ENCODE measurements at regions of chr15 and their contacts with region 1.

Region 1: DNA sequence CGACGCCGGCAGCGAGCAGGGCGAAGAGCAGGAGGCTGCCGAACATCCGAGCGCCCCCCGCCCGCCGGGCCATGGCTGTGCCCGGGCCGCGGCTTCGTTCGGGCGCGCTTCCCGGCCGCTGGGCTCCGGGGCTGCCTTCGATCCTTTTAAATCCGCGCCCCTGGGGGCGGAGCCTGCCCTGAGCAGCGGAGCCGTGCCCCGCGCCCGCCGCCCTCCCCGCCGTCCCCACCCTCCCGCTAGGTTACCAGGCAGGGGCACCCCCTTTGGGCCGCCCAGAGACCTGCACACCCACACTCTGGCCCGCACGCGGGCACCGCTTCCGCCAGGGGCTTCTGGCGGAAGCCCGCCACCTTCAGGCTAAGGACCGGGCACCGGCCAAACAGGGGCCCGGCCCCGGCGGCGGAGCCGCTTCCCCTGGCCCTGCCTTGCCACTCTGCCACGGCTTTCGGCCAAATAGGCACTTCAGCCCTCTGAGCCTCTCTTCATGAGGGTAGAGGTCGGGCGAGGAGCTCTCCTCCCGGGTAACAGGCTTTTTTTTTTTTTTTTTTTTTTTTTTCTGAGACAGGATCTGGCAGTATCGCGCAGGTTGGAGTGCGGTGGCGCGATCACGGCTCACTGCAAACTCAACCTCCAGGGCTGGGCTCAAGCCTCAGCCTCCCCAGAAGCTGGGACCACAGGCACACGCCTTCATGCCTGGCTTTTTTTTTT is at the start of gene NMB:
- DNase-seq: peak; percentile 95
- H3K4me3 Mint-ChIP-seq: peak within 1 kb of the TSS; percentile 74
- H3K27ac Mint-ChIP-seq: peak within 1 kb of the TSS; percentile 71
- H3K4me1 Mint-ChIP-seq: peaks cover 32% of the 10 kb centered on the region
- H3K27me3 Mint-ChIP-seq: no peaks in the 10 kb centered on the region
- CTCF ChIP-seq: peak; percentile 87
- total RNA-seq, gene NMB: 10.9 and 16.6 TPM in 2 replicates

Region 2: DNA sequence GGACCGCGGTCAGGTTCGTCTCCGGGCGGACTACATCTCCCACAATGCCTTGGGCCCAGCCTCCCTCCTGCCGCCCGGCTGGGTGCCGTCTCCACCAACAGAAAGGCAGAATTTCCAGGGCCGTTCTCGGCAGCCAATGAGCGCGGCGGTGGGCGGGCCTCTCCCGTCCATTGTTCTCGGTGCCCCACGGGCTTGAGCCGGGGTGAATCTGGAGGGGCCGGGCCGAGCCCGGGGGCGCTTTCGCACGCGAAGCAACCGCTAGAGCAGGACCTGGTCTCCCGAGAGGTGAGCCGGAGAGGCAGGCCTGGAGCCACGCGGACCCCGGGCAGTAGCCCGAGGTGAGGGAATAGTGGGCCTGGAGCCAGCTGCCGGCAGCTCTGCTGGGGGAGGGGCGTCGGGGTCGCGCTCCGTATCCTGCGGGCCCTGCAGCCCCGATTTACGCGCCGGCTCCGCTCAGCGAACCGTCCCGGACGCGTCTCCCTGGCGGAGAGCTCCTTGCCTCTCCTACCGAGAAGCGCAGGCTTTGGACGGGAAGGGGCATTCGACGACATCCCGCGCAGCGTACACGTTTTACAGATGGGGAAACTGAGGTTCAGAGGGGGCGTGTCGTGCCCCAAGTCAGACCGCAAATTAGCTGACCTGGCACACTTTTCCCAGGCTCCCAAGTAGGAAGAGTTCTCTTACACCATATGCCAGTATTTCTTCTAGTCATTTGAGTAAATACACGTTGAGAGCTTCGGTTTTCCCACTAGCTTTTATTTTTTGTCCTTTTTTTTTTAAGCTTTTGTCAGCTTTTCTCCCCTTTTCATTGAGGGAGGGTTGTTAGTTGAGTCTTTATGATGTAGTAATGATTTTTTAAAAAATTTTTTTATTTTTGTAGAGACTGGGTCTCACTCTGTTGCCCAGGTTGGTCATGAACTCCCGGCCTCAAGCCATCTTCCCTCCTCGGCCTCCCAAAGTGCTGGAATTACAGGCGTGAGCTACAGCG is 57.1 kb before region 1 on chr15 and contains the start of gene ZSCAN2:
- CTCF ChIA-PET with region 1: no interaction called
- intact Hi-C with region 1: loop called (anchors 5 kb)
- DNase-seq: peak; percentile 99
- H3K4me3 Mint-ChIP-seq: peak within 1 kb of the TSS; percentile 95
- H3K27ac Mint-ChIP-seq: peak within 1 kb of the TSS; percentile 80
- H3K4me1 Mint-ChIP-seq: peaks cover 39% of the 10 kb centered on the region
- H3K27me3 Mint-ChIP-seq: no peaks in the 10 kb centered on the region
- CTCF ChIP-seq: no peak
- total RNA-seq, gene ZSCAN2: 16.0 and 18.0 TPM in 2 replicates

Region 3: DNA sequence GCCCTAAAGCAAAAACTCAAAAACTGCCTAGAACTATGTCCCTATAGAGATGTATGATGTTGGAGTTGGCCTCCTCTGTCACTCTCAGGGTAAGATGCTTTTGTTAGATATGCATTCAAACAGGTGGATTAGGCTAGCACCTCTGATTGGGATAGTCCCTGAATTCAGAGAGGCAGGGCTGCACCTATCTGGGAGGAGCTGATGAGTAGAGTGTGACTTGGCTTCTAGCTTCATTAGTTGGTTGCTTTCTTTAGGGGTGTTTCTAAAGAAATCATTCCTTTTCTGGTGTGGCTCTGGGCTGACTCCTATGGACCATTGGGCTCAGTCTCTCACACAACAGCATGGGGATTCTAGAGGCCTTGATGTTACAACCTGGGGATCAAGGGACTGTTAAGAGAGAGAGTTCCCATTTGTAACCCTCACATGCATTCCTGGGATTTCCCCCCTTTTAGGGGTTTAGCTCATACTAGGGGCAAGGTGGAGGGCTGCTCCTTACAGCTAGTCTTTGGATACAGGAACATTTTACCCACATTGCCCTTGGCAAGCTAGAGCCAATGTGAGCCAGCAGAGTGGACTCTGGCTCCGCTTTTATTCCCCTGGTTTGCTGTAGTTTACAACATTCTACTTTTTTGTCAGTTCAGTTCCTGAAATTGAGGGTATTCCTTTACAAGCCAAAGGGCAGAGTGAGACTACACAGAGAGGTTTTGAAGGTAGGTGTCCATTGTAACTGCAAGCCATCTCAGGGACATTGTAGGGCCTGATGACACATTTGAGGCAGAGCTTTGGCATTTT is 97.7 kb after region 1 on chr15:
- CTCF ChIA-PET with region 1: interaction called, 6 read pairs
- intact Hi-C with region 1: loop called (anchors 2 kb)
- DNase-seq: no peak
- H3K4me3 Mint-ChIP-seq: no peak overlapping the region
- H3K27ac Mint-ChIP-seq: peak overlapping the region; percentile 40
- H3K4me1 Mint-ChIP-seq: peaks cover 36% of the 10 kb centered on the region
- H3K27me3 Mint-ChIP-seq: no peaks in the 10 kb centered on the region
- CTCF ChIP-seq: no peak

Region 4: DNA sequence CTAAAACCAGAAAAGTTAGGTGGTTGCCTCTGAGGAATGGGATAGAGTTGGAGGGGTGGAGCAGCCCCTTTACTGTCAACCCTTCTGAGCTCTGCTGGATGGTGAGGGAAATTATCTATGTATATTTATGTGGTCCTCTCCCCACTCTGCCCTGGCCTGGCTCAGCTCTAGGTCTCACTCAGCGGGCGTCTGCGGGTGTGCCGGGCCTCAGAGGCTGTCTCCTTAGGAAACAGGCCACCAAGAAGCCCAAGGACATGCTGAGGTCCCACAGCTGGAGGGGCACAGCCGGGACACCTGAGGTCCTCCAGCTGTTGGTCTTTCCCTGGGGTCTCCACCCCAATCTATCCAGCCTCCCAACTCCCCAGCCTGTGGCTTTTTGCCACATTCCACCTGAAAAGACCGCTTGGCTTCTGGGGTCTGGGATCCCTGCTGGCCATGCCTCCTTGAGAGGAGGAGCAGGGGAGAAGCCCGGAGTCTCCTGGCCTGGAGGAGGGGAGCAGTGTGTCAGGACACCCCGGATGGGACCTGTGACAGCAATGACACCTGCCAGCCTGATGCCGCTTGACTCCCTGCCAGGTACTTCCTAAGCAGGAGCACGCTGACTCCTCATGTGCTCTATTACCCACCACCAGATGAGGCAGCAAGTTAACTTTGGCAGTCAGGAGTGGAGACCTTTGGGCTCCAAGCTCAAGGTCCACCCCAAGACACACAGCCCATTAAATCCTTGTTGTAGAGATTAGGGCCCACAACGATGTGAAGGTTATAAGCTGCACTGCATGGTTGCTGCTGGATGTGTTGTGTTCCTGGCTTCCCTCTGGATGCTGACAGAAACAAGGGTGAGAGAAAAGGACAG is 225.9 kb after region 1 on chr15 and contains the start of gene SLC28A1:
- CTCF ChIA-PET with region 1: no interaction called
- intact Hi-C with region 1: no loop called
- DNase-seq: peak; percentile 20
- H3K4me3 Mint-ChIP-seq: no peak within 1 kb of the TSS
- H3K27ac Mint-ChIP-seq: peak within 1 kb of the TSS; percentile 80
- H3K4me1 Mint-ChIP-seq: peaks cover 32% of the 10 kb centered on the region
- H3K27me3 Mint-ChIP-seq: no peaks in the 10 kb centered on the region
- CTCF ChIP-seq: no peak
- total RNA-seq, gene SLC28A1: 0.17 and 0.37 TPM in 2 replicates

Region 5: DNA sequence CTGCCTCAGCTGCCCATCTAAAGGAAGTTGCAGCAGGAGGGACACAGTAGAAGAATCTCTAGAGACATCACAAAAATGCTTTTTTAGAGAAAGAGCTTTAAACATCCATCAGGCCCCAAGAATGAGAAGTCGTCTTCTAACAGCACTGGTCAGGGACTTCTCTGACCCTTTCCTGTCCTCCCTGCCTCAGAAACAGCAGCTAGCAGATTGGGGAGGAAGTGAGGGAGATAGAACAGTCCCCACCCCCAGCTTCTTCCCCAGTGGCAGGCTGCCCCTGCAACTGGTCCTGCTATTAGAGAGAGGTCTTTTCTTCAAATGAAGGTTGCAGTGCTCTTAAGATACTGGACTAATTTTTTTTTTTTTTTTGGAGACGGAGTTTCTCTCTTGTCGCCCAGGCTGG is 378.5 kb after region 1 on chr15:
- CTCF ChIA-PET with region 1: no interaction called
- intact Hi-C with region 1: no loop called
- DNase-seq: no peak
- H3K4me3 Mint-ChIP-seq: no peak overlapping the region
- H3K27ac Mint-ChIP-seq: no peak overlapping the region
- H3K4me1 Mint-ChIP-seq: peaks cover 42% of the 10 kb centered on the region
- H3K27me3 Mint-ChIP-seq: no peaks in the 10 kb centered on the region
- CTCF ChIP-seq: no peak